ENCODE measurements at regions of chr17 and their contacts with region 1.

Region 1: DNA sequence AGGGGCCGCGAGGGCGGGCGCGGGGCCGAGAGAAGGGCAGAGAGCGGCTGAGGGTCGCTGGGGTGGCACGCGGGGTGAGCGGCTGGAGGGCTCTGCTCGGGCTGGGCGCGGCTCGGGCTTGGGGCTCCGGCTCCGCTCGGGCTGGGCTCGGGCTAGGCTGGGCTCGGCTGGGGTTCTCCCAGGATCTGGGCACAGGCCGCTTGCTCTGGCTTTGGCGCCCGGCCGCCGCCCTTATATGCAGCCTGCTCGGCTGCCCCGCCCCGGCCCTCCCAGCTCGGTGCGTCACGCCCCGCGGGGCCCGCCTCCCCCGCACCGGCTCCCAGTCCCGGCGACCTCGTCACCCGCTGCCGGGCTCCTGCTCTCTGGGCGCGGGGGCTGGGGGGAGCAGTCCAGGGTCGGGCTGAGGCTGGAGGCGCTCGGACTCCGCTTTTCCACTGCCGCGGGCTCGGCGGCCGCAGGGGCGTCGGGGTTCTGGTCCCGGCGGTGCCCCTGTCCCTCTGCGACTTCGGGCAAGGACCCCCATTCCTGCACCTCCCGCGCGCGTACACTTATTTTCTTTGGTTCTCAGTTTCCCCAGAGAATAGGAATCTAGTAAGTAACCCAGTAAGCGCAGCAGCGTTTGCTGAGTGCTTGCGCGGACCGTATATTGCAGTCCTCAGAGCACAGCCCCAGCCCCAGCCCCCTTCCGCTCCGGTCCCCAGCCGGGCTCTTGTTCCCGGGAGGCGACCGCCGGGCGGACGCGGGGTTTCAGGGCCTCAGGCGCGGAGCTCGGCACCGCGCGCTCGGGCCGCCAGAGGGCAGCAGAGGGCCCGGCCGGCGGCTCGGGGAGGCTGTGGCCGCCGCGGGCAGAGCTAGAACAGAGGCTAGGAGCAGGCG is at the start of gene RASD1:
- DNase-seq: peak; percentile 90 to 96 (median 93)
- H3K4me3 ChIP-seq: peak within 1 kb of the TSS in 2 of 4 donors; percentile 29 to 58
- H3K27ac ChIP-seq: peak within 1 kb of the TSS; percentile 33 to 91 (median 78)
- H3K4me1 ChIP-seq: peaks cover 9 to 31% of the 10 kb centered on the region in 2 donors
- H3K27me3 ChIP-seq: no peaks in the 10 kb centered on the region
- CTCF ChIP-seq: peak; percentile 51 to 99 (median 80)
- POLR2A ChIP-seq: peak; percentile 99
- total RNA-seq, gene RASD1: 4.5 to 134 (median 22.3) TPM

Region 2: GRCh38 chr17:17476865-17477467 is 19.5 kb before region 1 on chr17 and contains the start of gene MED9:
- intact Hi-C with region 1: loop called in 1 of 2 experiments (anchors 2 kb)
- DNase-seq: peak; percentile 92 to 96 (median 93)
- H3K4me3 ChIP-seq: peak within 1 kb of the TSS; percentile 77 to 97 (median 92)
- H3K27ac ChIP-seq: peak within 1 kb of the TSS in 4 of 5 donors; percentile 88 to 95 (median 90)
- H3K4me1 ChIP-seq: peaks cover 12 to 46% of the 10 kb centered on the region in 2 donors
- H3K27me3 ChIP-seq: no peaks in the 10 kb centered on the region
- CTCF ChIP-seq: peak in 1 of 6 experiments; percentile 2
- POLR2A ChIP-seq: peak; percentile 54 to 55
- total RNA-seq, gene MED9: 8.2 to 41.2 (median 20.3) TPM

Region 3: GRCh38 chr17:17641621-17642409 is 145.4 kb after region 1 on chr17:
- intact Hi-C with region 1: loop called in 1 of 2 experiments (anchors 2 kb)
- DNase-seq: peak; percentile 70 to 90 (median 76)
- H3K4me3 ChIP-seq: no peak overlapping the region
- H3K27ac ChIP-seq: no peak overlapping the region
- H3K4me1 ChIP-seq: no peaks in the 10 kb centered on the region
- H3K27me3 ChIP-seq: no peaks in the 10 kb centered on the region
- CTCF ChIP-seq: peak; percentile 90 to 97 (median 94)
- POLR2A ChIP-seq: no peak

Measured in adrenal gland (tissue), 19 donors.